ENCODE measurements at regions of chr18 and their contacts with region 1.

Region 1: GRCh38 chr18:38186491-38186890 is 620.9 kb upstream of the CELF4 start:
- DNase-seq: no peak
- H3K4me3 ChIP-seq: no peak overlapping the region
- H3K27ac ChIP-seq: no peak overlapping the region
- H3K4me1 ChIP-seq: no peaks in the 10 kb centered on the region
- H3K27me3 ChIP-seq: no peaks in the 10 kb centered on the region
- CTCF ChIP-seq: no peak
- POLR2A ChIP-seq: no peak

Region 2: DNA sequence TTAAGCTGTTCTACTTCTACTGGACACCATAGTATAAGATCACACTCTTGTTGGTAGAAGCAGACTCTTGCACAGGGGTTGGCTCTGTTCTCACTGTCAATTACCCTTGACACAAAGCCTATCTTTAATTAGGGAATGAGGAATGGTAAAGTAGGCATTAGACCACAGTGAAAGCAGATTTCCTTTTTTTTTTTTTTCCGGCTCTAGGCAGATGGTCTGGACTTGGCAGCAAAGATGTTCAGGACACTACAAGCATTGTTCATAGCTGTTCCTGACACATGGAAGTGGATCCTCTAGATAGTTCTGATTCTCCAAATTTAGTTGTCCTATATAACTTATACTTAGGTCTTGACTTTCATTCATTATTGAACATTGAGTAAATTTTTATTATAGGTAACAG is 51.3 kb after region 1 on chr18:
- intact Hi-C with region 1: loop called (anchors 2 kb)
- DNase-seq: no peak
- H3K4me3 ChIP-seq: no peak overlapping the region
- H3K27ac ChIP-seq: no peak overlapping the region
- H3K4me1 ChIP-seq: no peaks in the 10 kb centered on the region
- H3K27me3 ChIP-seq: no peaks in the 10 kb centered on the region
- CTCF ChIP-seq: no peak
- POLR2A ChIP-seq: no peak

Region 3: GRCh38 chr18:38539373-38539772 is 352.9 kb after region 1 on chr18:
- intact Hi-C with region 1: no loop called
- DNase-seq: no peak
- H3K4me3 ChIP-seq: no peak overlapping the region
- H3K27ac ChIP-seq: no peak overlapping the region
- H3K4me1 ChIP-seq: no peaks in the 10 kb centered on the region
- H3K27me3 ChIP-seq: no peaks in the 10 kb centered on the region
- CTCF ChIP-seq: no peak
- POLR2A ChIP-seq: no peak

Measured in spleen (tissue), 13 donors.